H1 (cell line): ENCODE measurements at regions of chr6 and their contacts with region 1.

Region 1: GRCh38 chr6:106748547-106749207 is 119.3 kb downstream of the QRSL1 start:
- DNase-seq: peak; percentile 41 to 56
- H3K4me3 ChIP-seq: peak overlapping the region in 1 of 4 experiments; percentile 19; a peak in 1 of 8 replicates
- H3K27ac ChIP-seq: no peak overlapping the region
- H3K4me1 ChIP-seq: peaks cover 8 to 22% (median 19%) of the 10 kb centered on the region in 4 experiments
- H3K27me3 ChIP-seq: no peaks in the 10 kb centered on the region
- CTCF ChIP-seq: peak; percentile 45 to 71 (median 55); a peak in 3 of 4 replicates
- EP300 ChIP-seq: 0 out of 3 replicates have a peak, but pooled peaks of 1 of the 2 experiments have one; percentile 35
- POLR2A ChIP-seq: no peak
- RAD21 ChIP-seq: peak; percentile 43 to 61

Region 2: DNA sequence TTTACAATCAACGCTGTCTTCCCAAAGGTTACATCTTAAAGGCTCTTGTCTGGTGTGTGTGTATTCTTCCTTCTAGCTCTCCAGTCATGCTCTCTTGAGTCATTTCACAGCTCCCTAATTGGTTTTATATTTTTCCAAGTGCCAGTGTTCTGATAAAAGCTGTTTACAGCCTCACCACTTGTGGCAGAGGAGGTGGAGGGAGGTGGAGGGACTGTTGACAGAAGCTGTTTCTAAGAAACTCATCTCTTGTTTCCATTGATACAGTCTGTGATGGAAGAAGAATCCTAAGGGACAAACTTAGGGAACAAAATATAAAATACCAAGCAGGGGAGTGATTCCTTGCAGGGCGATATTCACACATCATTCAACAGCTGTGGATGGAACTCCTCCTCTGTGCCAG is 55.3 kb before region 1 on chr6:
- CTCF ChIA-PET with region 1: interaction called, 10 read pairs
- POLR2A ChIA-PET with region 1: interaction called, 3 read pairs
- DNase-seq: no peak
- H3K4me3 ChIP-seq: no peak overlapping the region
- H3K27ac ChIP-seq: peak overlapping the region; percentile 60; the same call in 1 of the 2 replicates
- H3K4me1 ChIP-seq: peaks cover 5 to 17% (median 10%) of the 10 kb centered on the region in 4 experiments; a peak in 6 of 7 replicates
- H3K27me3 ChIP-seq: no peaks in the 10 kb centered on the region
- CTCF ChIP-seq: no peak
- EP300 ChIP-seq: no peak
- POLR2A ChIP-seq: no peak
- RAD21 ChIP-seq: no peak

Region 3: GRCh38 chr6:106727480-106728149 is 21.1 kb before region 1 on chr6:
- CTCF ChIA-PET with region 1: interaction called, 10 read pairs
- POLR2A ChIA-PET with region 1: no interaction called
- DNase-seq: no peak
- H3K4me3 ChIP-seq: no peak overlapping the region
- H3K27ac ChIP-seq: no peak overlapping the region
- H3K4me1 ChIP-seq: no peaks in the 10 kb centered on the region
- H3K27me3 ChIP-seq: no peaks in the 10 kb centered on the region
- CTCF ChIP-seq: no peak
- EP300 ChIP-seq: no peak
- POLR2A ChIP-seq: no peak
- RAD21 ChIP-seq: no peak

Region 4: DNA sequence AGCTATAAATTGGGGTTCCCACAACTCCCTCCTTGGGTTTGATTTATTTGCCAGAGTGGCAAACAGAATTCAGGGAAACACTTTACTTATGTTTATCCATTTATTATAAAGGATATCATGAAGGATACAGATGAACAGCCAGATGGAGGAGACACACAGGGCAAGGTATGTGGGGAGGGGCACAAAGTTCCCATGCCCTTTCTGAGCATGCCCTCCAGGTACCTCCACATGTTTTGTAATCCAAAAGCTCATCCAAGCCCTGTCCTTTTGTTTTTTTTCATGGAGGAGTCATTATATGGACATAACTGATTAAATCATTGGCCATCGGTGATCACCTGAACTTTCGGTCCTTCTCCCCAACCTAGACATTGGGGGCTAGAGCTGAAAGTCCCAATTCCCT is 11.2 kb before region 1 on chr6:
- CTCF ChIA-PET with region 1: interaction called, 10 read pairs
- POLR2A ChIA-PET with region 1: no interaction called
- DNase-seq: no peak
- H3K4me3 ChIP-seq: no peak overlapping the region
- H3K27ac ChIP-seq: no peak overlapping the region
- H3K4me1 ChIP-seq: peaks cover 0 to 3% (median 0%) of the 10 kb centered on the region in 4 experiments; a peak in 3 of 7 replicates
- H3K27me3 ChIP-seq: no peaks in the 10 kb centered on the region
- CTCF ChIP-seq: no peak
- EP300 ChIP-seq: no peak
- POLR2A ChIP-seq: no peak
- RAD21 ChIP-seq: no peak

Region 5: GRCh38 chr6:106764353-106764980 is 15.8 kb after region 1 on chr6:
- CTCF ChIA-PET with region 1: no interaction called
- POLR2A ChIA-PET with region 1: no interaction called
- DNase-seq: no peak
- H3K4me3 ChIP-seq: no peak overlapping the region
- H3K27ac ChIP-seq: no peak overlapping the region
- H3K4me1 ChIP-seq: no peaks in the 10 kb centered on the region
- H3K27me3 ChIP-seq: no peaks in the 10 kb centered on the region; a peak in 1 of 7 replicates
- CTCF ChIP-seq: no peak
- EP300 ChIP-seq: no peak
- POLR2A ChIP-seq: no peak
- RAD21 ChIP-seq: no peak

Region 6: DNA sequence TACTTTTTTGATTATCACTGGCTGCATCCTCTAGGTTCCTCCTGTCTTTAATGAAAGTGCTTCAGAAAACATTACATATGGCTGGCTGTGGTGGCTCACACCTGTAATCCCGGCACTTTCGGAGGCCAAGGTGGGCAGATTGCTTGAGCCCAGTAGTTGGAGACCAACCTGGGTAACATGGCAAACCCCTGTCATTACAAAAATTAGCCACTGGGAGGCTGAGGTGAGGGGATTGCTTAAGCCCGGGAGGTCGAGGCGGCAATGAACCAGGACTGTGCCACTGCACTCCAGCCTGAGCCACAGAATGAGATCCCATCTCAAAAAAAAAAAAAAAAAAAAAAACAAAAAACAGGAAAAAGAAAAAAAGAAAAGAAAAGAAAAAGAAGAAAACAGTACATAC is 331.4 kb after region 1 on chr6:
- CTCF ChIA-PET with region 1: no interaction called
- POLR2A ChIA-PET with region 1: no interaction called
- DNase-seq: peak in 1 of 2 experiments; percentile 66
- H3K4me3 ChIP-seq: no peak overlapping the region
- H3K27ac ChIP-seq: no peak overlapping the region
- H3K4me1 ChIP-seq: no peaks in the 10 kb centered on the region; a peak in 1 of 7 replicates
- H3K27me3 ChIP-seq: no peaks in the 10 kb centered on the region
- CTCF ChIP-seq: peak; percentile 30 to 56 (median 47); a peak in 3 of 4 replicates
- EP300 ChIP-seq: no peak
- POLR2A ChIP-seq: no peak
- RAD21 ChIP-seq: peak; percentile 50 to 61